ENCODE measurements at regions of chr6 and their contacts with region 1.

Region 1: DNA sequence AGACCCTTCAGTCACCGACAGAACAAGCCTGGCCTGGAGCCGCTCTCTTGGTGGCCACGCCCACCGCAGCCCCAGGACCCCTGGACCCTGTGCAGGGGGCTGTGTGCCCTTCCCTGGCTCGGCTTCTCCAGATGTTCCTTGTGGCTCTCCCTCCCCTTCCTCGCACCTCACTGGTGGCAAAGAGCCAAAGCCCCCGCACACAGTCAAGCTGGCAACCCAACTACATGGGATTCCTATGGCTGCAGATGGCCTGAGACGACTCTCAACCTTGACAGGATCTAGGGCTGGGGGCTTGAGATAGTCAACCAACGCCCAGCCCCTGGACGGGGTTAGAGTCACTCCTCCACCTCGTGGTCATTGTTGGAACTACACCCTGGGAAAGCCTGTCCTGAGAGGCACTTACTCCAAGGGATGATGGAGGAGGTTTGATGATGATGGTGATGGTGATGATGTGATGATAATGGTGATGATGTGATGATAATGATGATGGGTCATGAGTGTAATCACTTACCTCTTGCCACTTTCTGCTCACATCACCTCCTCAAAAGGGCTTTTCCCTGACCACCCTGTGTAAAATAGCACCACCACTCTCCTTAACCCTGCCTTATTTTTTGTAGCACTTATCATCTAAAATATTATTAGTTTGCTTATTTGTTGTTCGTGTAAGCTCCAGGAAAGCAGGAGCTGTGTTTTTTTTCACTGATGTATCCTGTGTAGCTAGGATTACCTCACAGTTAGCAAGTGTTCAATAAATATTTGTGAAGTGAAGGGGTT is 278.4 kb downstream of the LRFN2 start:
- H3K4me3 Mint-ChIP-seq: no peak overlapping the region
- H3K27ac Mint-ChIP-seq: no peak overlapping the region
- H3K4me1 Mint-ChIP-seq: peaks cover 5% of the 10 kb centered on the region
- H3K27me3 Mint-ChIP-seq: peaks cover 17% of the 10 kb centered on the region

Region 2: DNA sequence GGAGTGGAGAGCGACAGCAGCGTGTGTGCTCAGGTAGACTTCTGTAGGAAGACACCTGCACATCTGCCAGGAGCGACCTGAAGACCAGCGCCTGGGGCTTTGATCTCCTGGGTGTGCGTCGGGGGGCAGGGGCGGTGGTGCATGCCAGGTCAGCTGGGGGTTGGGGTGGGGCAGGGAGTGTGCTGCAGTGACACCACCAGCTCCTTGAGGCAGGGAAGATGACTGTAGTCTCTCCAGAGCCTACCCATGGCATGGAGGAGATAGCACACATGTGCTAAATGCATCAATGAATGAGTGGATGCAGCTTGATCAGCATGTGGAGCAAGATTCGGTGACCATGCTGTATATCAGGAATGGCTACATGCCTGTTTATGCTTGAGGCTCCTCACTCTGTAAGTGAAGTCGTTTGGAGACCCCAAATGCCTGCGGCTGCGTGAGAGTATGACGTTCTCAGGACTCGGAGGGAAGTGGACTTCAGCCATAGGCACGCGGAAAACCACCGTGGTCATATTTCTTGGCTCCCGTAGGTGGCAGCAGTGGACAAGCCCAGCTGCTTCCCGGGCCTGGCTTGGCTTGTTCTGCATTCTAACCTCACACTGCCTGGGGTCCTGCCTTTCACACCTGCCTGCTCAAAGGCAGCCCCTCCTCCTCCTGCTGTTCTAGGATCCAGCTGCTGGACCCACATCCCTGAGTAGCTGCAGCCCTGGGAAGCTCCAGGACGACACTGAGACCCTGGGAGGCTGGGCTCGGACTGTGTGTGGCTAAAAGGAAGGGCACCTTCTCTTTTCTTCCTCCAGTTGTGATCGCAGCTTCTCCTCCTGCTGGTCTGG is 946.8 kb before region 1 on chr6:
- intact Hi-C with region 1: loop called (anchors 2 kb)
- H3K4me3 Mint-ChIP-seq: no peak overlapping the region
- H3K27ac Mint-ChIP-seq: no peak overlapping the region
- H3K4me1 Mint-ChIP-seq: peaks cover 10% of the 10 kb centered on the region
- H3K27me3 Mint-ChIP-seq: peaks cover 10% of the 10 kb centered on the region

Region 3: GRCh38 chr6:39865011-39865888 is 443.5 kb before region 1 on chr6:
- intact Hi-C with region 1: loop called (anchors 2 kb)
- H3K4me3 Mint-ChIP-seq: no peak overlapping the region
- H3K27ac Mint-ChIP-seq: no peak overlapping the region
- H3K4me1 Mint-ChIP-seq: no peaks in the 10 kb centered on the region
- H3K27me3 Mint-ChIP-seq: peaks cover 8% of the 10 kb centered on the region

Region 4: GRCh38 chr6:39980839-39981580 is 327.7 kb before region 1 on chr6:
- intact Hi-C with region 1: loop called (anchors 5 kb)
- H3K4me3 Mint-ChIP-seq: no peak overlapping the region
- H3K27ac Mint-ChIP-seq: no peak overlapping the region
- H3K4me1 Mint-ChIP-seq: no peaks in the 10 kb centered on the region
- H3K27me3 Mint-ChIP-seq: peaks cover 1% of the 10 kb centered on the region